WTC11 (cell line): ENCODE measurements at regions of chr11 and their contacts with region 1.

Region 1: DNA sequence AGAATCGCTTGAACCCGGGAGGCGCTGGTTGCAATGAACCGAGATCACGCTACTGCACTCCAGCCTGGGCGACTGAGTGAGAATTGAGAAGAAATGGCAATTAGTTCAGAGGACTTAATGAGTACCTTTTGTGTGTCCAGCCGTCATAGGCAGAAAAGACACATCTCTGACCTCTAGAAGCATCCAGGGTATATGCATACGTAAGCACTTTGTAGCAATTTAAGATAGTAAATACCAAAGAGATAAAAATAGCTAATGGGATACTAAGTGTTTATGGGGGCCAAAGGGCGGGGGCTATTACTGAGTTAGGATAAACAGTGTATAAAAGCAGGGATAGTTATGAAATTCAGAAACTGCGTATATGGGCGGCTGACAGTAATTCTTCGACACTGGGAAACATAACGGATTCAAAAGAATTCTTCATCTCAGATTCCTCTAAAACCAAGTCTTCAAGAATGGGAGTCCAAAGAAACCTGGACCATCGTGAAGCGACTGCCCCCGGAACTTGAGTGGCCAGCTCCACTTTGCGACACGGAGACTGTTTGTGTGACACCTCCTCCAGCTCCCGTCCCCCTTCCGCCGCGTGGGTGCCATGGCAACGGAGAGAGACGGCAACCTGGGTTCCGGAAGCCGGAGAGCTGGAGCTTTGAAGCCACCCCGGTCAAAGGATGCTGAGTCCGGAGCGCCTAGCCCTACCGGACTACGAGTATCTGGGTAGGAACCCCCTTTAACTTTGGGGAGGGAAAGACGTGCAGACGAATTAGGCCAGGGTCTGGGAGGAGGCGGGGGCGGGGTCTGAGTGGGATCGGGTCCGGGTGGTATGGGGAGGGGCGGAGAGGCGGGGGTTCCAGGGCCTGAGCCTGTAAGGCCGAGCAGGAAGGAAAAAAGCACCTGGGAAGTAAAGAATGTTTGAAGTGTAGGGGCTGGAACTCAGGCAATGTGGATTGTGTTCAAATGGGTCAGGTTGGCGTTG is at the start of gene CSTPP1:
- DNase-seq: peak; percentile 96
- ATAC-seq: peak; percentile 94
- H3K4me3 Mint-ChIP-seq: peak within 1 kb of the TSS; percentile 97
- H3K27ac Mint-ChIP-seq: peak within 1 kb of the TSS; percentile 89
- H3K4me1 Mint-ChIP-seq: peaks cover 9% of the 10 kb centered on the region
- H3K27me3 Mint-ChIP-seq: peaks cover 7% of the 10 kb centered on the region
- CTCF ChIP-seq: no peak
- total RNA-seq, gene CSTPP1: 23.6 to 27.6 TPM (median 27.5 TPM) in 3 replicates

Region 2: GRCh38 chr11:46916286-46917108 is 19.9 kb before region 1 on chr11:
- CTCF ChIA-PET with region 1: interaction called, 15 read pairs
- POLR2A ChIA-PET with region 1: interaction called, 11 read pairs
- DNase-seq: peak; percentile 70
- ATAC-seq: peak; percentile 18
- H3K4me3 Mint-ChIP-seq: peak overlapping the region; percentile 89
- H3K27ac Mint-ChIP-seq: peak overlapping the region; percentile 50
- H3K4me1 Mint-ChIP-seq: peaks cover 71% of the 10 kb centered on the region
- H3K27me3 Mint-ChIP-seq: peaks cover 7% of the 10 kb centered on the region; the same call in 1 of the 2 replicates
- CTCF ChIP-seq: no peak